ENCODE measurements at regions of chr11 and their contacts with region 1.

Region 1: DNA sequence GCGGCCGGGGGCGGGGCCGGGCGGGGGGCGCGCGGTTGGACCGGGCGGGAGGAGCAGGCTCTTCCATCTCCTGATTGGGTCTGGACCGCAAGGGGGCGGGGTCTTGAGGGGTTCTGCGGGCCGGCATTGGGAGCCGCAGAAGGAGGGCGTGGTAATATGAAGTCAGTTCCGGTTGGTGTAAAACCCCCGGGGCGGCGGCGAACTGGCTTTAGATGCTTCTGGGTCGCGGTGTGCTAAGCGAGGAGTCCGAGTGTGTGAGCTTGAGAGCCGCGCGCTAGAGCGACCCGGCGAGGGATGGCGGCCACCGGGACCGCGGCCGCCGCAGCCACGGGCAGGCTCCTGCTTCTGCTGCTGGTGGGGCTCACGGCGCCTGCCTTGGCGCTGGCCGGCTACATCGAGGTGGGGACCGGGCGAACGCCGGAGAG is at the start of gene APLP2:
- DNase-seq: peak; percentile 95
- H3K4me3 Mint-ChIP-seq: peak within 1 kb of the TSS; percentile 87
- H3K27ac Mint-ChIP-seq: peak within 1 kb of the TSS; percentile 82
- H3K4me1 Mint-ChIP-seq: peaks cover 22% of the 10 kb centered on the region
- H3K27me3 Mint-ChIP-seq: peaks cover 36% of the 10 kb centered on the region
- total RNA-seq, gene APLP2: 54.6 and 57.2 TPM in 2 replicates

Region 2: DNA sequence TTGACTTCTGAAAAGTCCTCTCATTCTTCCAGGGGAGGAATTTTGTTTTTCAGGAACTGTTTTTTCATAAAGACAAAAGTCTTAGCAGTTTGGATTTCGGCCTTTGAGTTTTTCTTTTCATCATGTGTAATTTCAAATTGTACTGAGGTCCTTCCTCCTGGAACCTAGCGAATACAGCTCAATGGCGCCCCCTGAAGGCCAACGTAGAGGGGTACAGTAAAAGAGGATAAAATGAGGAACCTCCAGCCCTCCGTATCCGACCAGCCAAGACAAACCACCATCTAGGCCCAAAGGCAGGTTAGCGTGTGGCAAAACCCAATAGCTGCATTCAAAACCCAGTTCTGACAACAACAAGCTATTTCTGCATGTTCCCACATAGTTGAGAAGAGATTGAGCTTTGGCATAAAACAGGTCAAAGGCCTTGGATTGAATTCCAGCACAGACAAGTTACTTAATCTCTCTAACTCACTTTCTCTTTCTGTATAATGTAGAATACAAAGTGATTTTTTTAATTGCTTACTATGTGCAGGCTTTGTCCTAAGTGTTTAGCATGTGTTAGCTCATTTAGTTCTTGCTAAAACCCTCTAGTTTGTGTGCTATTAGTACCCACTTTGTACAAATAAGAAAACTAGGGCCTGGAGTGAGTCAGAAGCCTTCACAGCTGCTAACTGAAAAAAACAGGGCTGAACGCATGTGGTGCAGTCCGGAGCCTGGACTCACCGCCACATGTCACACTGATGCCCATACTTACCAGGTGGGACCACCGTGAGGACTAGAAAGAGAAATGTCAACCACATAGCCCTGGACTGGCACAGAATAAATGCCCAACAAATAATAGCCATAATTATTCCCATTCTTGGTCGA is 1439.1 kb before region 1 on chr11:
- intact Hi-C with region 1: no loop called
- DNase-seq: peak; percentile 81
- H3K4me3 Mint-ChIP-seq: peak overlapping the region; percentile 28
- H3K27ac Mint-ChIP-seq: peak overlapping the region; percentile 97
- H3K4me1 Mint-ChIP-seq: peaks cover 59% of the 10 kb centered on the region
- H3K27me3 Mint-ChIP-seq: no peaks in the 10 kb centered on the region

Region 3: GRCh38 chr11:129895126-129896041 is 174.3 kb before region 1 on chr11 and contains the start of gene NFRKB:
- intact Hi-C with region 1: loop called (anchors 1 kb)
- DNase-seq: peak; percentile 81
- H3K4me3 Mint-ChIP-seq: peak within 1 kb of the TSS; percentile 90
- H3K27ac Mint-ChIP-seq: peak within 1 kb of the TSS; percentile 82
- H3K4me1 Mint-ChIP-seq: peaks cover 26% of the 10 kb centered on the region
- H3K27me3 Mint-ChIP-seq: no peaks in the 10 kb centered on the region
- total RNA-seq, gene NFRKB: 42.6 and 42.8 TPM in 2 replicates

Region 4: DNA sequence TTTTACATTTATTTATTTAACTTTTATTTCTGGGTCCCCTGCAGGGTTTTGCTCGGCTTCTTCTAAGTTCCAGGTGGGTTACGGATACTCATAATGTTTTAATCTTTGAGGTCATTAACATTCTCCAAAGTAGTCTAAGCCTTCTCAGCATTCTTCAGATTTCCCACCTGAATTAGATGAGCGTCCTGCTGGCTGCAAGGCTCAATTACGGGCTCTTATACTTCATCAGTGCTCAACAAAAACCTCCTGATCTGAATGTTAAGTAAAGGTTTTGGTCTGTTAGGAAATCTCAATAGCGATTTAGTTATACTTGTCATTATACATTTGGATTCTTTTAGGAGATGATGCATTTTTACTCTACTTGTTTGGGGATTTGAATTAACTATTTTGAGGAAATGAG is 147.0 kb before region 1 on chr11:
- intact Hi-C with region 1: loop called (anchors 1 kb)
- DNase-seq: no peak
- H3K4me3 Mint-ChIP-seq: no peak overlapping the region
- H3K27ac Mint-ChIP-seq: no peak overlapping the region
- H3K4me1 Mint-ChIP-seq: peaks cover 9% of the 10 kb centered on the region
- H3K27me3 Mint-ChIP-seq: no peaks in the 10 kb centered on the region

Region 5: GRCh38 chr11:130002846-130003716 is 66.6 kb before region 1 on chr11:
- intact Hi-C with region 1: loop called (anchors 1 kb)
- DNase-seq: peak; percentile 90
- H3K4me3 Mint-ChIP-seq: peak overlapping the region; percentile 98
- H3K27ac Mint-ChIP-seq: peak overlapping the region; percentile 100
- H3K4me1 Mint-ChIP-seq: peaks cover 30% of the 10 kb centered on the region
- H3K27me3 Mint-ChIP-seq: peaks cover 6% of the 10 kb centered on the region

Region 6: DNA sequence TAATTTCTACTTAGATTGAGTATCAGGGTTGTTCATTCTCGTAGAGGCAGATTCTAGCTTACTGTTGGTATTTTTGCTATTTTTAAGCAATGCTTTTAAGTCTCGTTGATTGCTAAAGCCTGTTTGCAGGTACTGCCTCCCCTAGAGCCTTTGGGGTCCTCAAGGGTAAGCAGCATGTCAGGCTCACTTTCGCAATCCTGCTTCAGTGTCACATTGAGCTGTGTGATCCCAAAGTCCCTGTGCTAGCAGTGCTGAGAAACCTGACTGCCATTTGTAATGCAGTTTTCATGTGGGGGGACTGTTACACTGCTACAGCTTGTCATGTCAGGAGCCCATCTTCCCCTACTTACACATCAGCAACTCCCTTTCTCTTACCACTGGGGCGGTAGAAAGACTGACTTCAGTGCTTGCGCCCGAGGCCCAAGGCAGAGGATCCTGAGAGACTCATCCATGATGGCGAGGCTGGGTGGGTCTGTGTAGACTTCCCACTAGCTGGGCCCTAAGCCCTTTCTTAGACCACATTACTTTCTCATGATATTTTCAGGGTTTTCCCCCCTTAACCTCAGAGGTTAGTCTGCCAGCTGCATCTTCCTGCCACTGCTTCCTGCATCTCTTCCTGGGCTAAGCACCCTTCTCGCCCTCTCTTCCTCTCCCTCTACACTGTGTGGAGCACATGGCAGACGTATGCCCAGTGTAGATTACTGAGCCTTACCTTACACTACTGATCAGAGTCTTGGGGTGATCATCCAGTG is 49.1 kb after region 1 on chr11:
- intact Hi-C with region 1: loop called (anchors 2 kb)
- DNase-seq: no peak
- H3K4me3 Mint-ChIP-seq: no peak overlapping the region
- H3K27ac Mint-ChIP-seq: no peak overlapping the region
- H3K4me1 Mint-ChIP-seq: peaks cover 41% of the 10 kb centered on the region
- H3K27me3 Mint-ChIP-seq: peaks cover 12% of the 10 kb centered on the region

Region 7: GRCh38 chr11:130131961-130132850 is 62.5 kb after region 1 on chr11:
- intact Hi-C with region 1: loop called (anchors 2 kb)
- DNase-seq: peak; percentile 34
- H3K4me3 Mint-ChIP-seq: no peak overlapping the region
- H3K27ac Mint-ChIP-seq: no peak overlapping the region
- H3K4me1 Mint-ChIP-seq: no peaks in the 10 kb centered on the region
- H3K27me3 Mint-ChIP-seq: no peaks in the 10 kb centered on the region

Region 8: GRCh38 chr11:130246738-130247137 is 177.0 kb after region 1 on chr11:
- intact Hi-C with region 1: no loop called
- DNase-seq: no peak
- H3K4me3 Mint-ChIP-seq: no peak overlapping the region
- H3K27ac Mint-ChIP-seq: peak overlapping the region; percentile 54
- H3K4me1 Mint-ChIP-seq: peaks cover 38% of the 10 kb centered on the region
- H3K27me3 Mint-ChIP-seq: no peaks in the 10 kb centered on the region

Measured in activated T-helper 2 cell treated with anti-CD3 and anti-CD28 coated beads, Interferon-gamma antibody, Interleukin-2, Interleukin-4, amounts not matched to agents 10 μg/mL and 5 μg/mL and 100 μg/mL, durations not matched to agents 14 hours and 24 hours and 36 hours (primary cell).